HEK293T (cell line): ENCODE measurements at regions of chr12 and their contacts with region 1.

Region 1: DNA sequence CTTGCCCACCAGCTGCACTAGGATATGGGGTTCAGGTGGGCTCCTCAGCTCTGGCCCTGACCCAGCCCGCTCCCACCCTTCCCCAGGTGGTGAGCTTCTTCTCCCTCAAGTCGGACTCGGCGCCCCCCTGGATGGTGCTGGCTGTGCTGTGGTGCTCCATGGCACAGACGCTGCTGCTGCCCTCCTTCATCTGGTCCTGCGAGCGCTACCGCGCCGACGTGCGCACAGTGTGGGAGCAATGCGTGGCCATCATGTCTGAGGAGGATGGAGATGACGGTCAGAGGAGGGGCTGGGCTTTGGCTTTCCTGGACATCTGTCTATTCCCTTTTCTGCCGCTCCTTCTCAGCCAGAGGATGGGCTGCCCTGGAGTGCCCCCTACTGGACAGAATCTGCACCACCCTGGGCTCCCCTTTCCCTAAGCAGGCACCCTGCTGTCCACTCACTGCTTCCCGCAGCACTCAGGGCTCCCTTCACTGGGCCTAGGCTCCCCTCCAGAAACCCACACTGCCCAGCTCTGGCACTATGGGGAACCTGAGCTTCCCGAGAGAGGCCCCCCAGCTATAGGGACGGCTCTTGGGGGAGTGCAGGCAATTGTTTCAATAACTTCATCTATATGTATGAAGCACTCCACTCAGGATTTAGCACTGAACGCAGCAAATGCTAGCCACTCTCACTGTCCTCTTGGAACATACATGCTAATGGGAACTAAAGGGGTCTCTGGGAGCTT is 2.6 kb upstream of the P3H3 start:
- DNase-seq: peak; percentile 85

Region 2: GRCh38 chr12:5678176-5678575 is 1147.4 kb before region 1 on chr12:
- CTCF ChIA-PET with region 1: no interaction called
- POLR2A ChIA-PET with region 1: no interaction called
- DNase-seq: no peak

Region 3: GRCh38 chr12:6764011-6764828 is 61.3 kb before region 1 on chr12:
- CTCF ChIA-PET with region 1: interaction called, 15 read pairs
- POLR2A ChIA-PET with region 1: interaction called, 46 read pairs
- DNase-seq: peak; percentile 94

Region 4: DNA sequence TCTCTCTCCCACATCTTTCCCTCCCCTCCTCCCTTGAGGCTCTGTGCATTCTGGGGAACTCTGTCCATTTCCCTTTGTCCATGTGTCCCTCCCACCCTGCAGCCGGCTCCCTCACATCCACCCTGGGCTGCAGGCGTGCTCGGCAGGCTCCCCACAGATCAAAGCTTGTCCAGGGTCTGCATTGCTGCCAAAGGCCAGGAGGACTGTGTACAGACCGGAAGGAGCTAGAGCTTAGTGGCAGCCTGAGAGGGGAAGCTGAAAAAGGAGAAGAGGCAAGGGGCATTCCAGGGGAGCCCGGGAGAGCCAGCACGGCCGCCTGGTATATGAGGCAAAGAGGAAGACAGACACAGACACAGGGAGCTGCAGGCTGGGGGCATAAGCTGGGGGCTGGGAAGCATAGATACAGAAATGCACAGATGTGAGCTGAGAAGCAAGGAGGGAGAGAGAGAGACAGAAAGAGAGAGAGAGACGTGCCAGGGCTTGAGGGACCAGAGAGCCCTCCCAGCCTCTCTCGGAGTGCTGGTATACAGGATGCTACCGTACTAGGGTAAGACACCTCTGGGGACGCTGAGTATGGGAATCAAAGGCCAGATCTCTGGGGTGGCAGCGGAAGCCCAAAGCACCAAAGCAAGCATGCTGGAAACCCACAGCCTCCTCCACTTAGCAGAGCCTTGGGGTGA is 32.9 kb before region 1 on chr12:
- CTCF ChIA-PET with region 1: no interaction called
- POLR2A ChIA-PET with region 1: interaction called, 10 read pairs
- DNase-seq: no peak

Region 5: GRCh38 chr12:6839482-6840201 is 14.1 kb after region 1 on chr12:
- CTCF ChIA-PET with region 1: interaction called, 7 read pairs
- POLR2A ChIA-PET with region 1: interaction called, 22 read pairs
- DNase-seq: no peak